B cell (primary cell): ENCODE measurements at regions of chr12 and their contacts with region 1.

Region 1: DNA sequence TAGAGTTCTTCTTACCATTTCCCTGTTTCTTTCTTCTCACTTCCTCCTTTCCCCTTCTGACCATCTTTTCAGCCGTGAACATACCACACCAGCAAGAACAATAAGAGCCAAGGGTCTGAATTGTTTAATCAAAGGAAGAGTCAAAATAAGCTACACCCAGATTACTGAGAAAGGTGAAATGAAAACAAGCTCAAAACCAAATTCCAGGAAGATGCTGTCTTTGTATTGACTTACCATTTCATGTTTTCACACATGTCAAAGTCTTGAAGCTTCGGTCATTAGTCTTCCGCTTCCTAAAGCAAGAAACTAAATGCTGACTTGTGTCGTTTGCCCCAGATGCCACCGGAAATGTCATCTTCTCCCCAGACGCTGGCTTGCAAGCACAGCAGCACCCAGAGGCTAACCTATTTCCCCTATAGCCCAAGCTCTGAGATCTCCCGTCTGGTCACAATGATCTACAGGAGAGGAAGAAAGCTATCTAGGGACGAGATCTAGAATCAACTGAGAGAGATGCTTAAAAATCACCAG is 136.5 kb upstream of the AMIGO2 start:
- DNase-seq: peak; percentile 88
- ATAC-seq: peak; percentile 85
- H3K4me3 ChIP-seq: peak overlapping the region; percentile 56 to 80 (median 60)
- H3K4me3 Mint-ChIP-seq: peak overlapping the region; percentile 90
- H3K27ac ChIP-seq: peak overlapping the region; percentile 78 to 89
- H3K27ac Mint-ChIP-seq: peak overlapping the region; percentile 92
- H3K4me1 ChIP-seq: peaks cover 63 to 73% of the 10 kb centered on the region in 2 donors
- H3K4me1 Mint-ChIP-seq: peaks cover 56% of the 10 kb centered on the region
- H3K27me3 ChIP-seq: no peaks in the 10 kb centered on the region
- H3K27me3 Mint-ChIP-seq: no peaks in the 10 kb centered on the region
- CTCF ChIP-seq: no peak

Region 2: GRCh38 chr12:46217541-46218321 is 998.5 kb before region 1 on chr12:
- CTCF ChIA-PET with region 1: no interaction called
- POLR2A ChIA-PET with region 1: no interaction called
- intact Hi-C with region 1: loop called (anchors 5 kb)
- DNase-seq: peak; percentile 87
- ATAC-seq: peak; percentile 70
- H3K4me3 ChIP-seq: peak overlapping the region in 4 of 5 experiments; percentile 16 to 59 (median 32)
- H3K4me3 Mint-ChIP-seq: peak overlapping the region; percentile 69
- H3K27ac ChIP-seq: peak overlapping the region; percentile 83 to 96
- H3K27ac Mint-ChIP-seq: peak overlapping the region; percentile 86
- H3K4me1 ChIP-seq: peaks cover 94 to 97% of the 10 kb centered on the region in 2 donors
- H3K4me1 Mint-ChIP-seq: peaks cover 94% of the 10 kb centered on the region
- H3K27me3 ChIP-seq: no peaks in the 10 kb centered on the region
- H3K27me3 Mint-ChIP-seq: no peaks in the 10 kb centered on the region
- CTCF ChIP-seq: no peak

Region 3: GRCh38 chr12:47079468-47079980 is 136.7 kb before region 1 on chr12 and contains the starts of genes AMIGO2 and PCED1B:
- CTCF ChIA-PET with region 1: interaction called, 9 read pairs
- POLR2A ChIA-PET with region 1: interaction called, 6 read pairs
- intact Hi-C with region 1: loop called (anchors 5 kb)
- DNase-seq: peak; percentile 68
- ATAC-seq: peak; percentile 50
- H3K4me3 ChIP-seq: peak within 1 kb of the TSS; percentile 74 to 92 (median 83)
- H3K4me3 Mint-ChIP-seq: peak within 1 kb of the TSS; percentile 98
- H3K27ac ChIP-seq: peak within 1 kb of the TSS; percentile 53 to 78
- H3K27ac Mint-ChIP-seq: peak within 1 kb of the TSS; percentile 91
- H3K4me1 ChIP-seq: peaks cover 17 to 29% of the 10 kb centered on the region in 2 donors
- H3K4me1 Mint-ChIP-seq: peaks cover 59% of the 10 kb centered on the region
- H3K27me3 ChIP-seq: no peaks in the 10 kb centered on the region
- H3K27me3 Mint-ChIP-seq: no peaks in the 10 kb centered on the region
- CTCF ChIP-seq: no peak
- total RNA-seq, gene AMIGO2: 9.2 and 10.4 TPM in 2 replicates
- total RNA-seq, gene PCED1B: 45.8 and 48.0 TPM in 2 replicates

Region 4: DNA sequence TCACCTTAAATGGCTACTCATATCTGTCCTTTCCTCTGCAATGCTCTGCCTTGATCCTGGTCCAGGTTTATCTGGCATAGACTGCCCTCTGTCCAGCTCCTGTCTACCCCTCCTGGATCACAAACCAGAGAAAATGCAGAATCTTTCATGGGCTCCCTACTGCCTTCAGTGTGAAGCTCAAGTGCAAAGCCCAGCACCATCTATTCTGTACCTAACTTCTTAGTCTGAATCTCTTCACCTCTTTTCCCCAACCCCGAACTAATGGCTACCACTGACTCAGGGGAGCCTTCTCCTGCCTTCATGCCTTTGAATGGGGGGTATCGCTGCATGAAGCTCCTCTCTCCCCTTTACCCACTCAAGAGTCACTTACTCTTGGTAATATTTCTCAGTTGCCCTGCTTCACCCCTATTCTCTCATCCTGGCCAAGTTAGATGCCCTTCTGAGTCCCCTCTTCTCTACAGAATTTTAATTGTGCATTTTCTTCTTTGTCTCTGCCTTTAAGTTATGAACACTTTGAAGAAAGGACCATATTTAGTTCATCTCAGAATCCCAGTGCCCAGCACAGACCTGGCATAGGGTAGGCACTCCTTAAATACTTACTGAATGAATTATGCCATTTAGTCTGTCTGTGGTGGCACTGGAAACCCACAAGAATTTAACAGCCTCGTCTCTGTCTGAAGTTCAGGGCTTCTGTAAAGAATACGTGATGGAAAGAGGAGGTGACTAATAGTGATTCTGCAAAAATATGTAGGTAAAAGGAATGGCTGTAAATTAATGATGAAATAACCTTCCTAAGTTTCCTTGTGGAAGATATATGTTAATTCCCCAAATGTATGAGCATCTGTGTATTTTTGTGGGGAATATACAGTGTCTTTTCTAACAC is 54.8 kb after region 1 on chr12:
- CTCF ChIA-PET with region 1: interaction called, 4 read pairs
- POLR2A ChIA-PET with region 1: interaction called, 4 read pairs
- intact Hi-C with region 1: loop called (anchors 2 kb)
- DNase-seq: no peak
- ATAC-seq: no peak
- H3K4me3 ChIP-seq: no peak overlapping the region
- H3K4me3 Mint-ChIP-seq: peak overlapping the region; percentile 15
- H3K27ac ChIP-seq: no peak overlapping the region
- H3K27ac Mint-ChIP-seq: peak overlapping the region; percentile 70
- H3K4me1 ChIP-seq: peaks cover 62 to 67% of the 10 kb centered on the region in 2 donors
- H3K4me1 Mint-ChIP-seq: peaks cover 85% of the 10 kb centered on the region
- H3K27me3 ChIP-seq: no peaks in the 10 kb centered on the region
- H3K27me3 Mint-ChIP-seq: no peaks in the 10 kb centered on the region
- CTCF ChIP-seq: no peak